Vagina (tissue), 2 donors: ENCODE measurements at regions of chr18 and their contacts with region 1.

Region 1: DNA sequence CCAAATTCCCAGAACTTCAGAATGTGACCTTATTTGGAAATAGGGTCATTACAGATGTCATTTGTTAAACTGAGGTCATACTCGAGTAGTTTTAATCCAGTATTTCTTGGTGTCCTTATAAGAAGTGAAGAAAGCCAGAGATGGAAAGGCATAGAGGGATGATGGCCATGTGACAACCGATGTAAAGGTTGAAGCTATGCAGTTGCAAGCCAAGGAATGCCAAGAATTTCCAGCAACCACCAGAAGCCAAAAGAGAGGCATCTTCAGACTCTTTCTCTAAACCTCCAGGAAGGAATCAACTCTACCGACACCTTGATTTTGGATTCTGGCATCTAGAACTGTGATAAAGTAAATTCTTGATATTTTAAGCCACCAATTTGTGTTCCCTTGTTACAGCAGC is 242.2 kb downstream of the CDH20 start:
- DNase-seq: no peak
- H3K4me3 ChIP-seq: no peak overlapping the region
- H3K27ac ChIP-seq: no peak overlapping the region
- H3K4me1 ChIP-seq: no peaks in the 10 kb centered on the region
- H3K27me3 ChIP-seq: no peaks in the 10 kb centered on the region
- CTCF ChIP-seq: no peak
- POLR2A ChIP-seq: no peak

Region 2: GRCh38 chr18:62128157-62128556 is 552.7 kb after region 1 on chr18:
- intact Hi-C with region 1: loop called (anchors 10 kb)
- DNase-seq: no peak
- H3K4me3 ChIP-seq: no peak overlapping the region
- H3K27ac ChIP-seq: no peak overlapping the region
- H3K4me1 ChIP-seq: no peaks in the 10 kb centered on the region
- H3K27me3 ChIP-seq: no peaks in the 10 kb centered on the region
- CTCF ChIP-seq: no peak
- POLR2A ChIP-seq: no peak